ENCODE measurements at regions of chr15 and their contacts with region 1.

Region 1: GRCh38 chr15:45279024-45279698 is 27.1 kb downstream of the SLC28A2 start:
- DNase-seq: peak; percentile 96
- H3K4me3 ChIP-seq: peak overlapping the region; percentile 10 to 60 (median 46)
- H3K27ac ChIP-seq: peak overlapping the region; percentile 32
- H3K4me1 ChIP-seq: peaks cover 8% of the 10 kb centered on the region
- H3K27me3 ChIP-seq: no peaks in the 10 kb centered on the region
- CTCF ChIP-seq: no peak
- POLR2A ChIP-seq: peak; percentile 79

Region 2: GRCh38 chr15:44999105-44999504 is 280.1 kb before region 1 on chr15:
- CTCF ChIA-PET with region 1: no interaction called
- POLR2A ChIA-PET with region 1: no interaction called
- dilution Hi-C with region 1: no loop called
- intact Hi-C with region 1: no loop called
- DNase-seq: no peak
- H3K4me3 ChIP-seq: no peak overlapping the region
- H3K27ac ChIP-seq: no peak overlapping the region
- H3K4me1 ChIP-seq: no peaks in the 10 kb centered on the region
- H3K27me3 ChIP-seq: peaks cover 9% of the 10 kb centered on the region in 2 experiments
- CTCF ChIP-seq: no peak
- POLR2A ChIP-seq: no peak

Region 3: DNA sequence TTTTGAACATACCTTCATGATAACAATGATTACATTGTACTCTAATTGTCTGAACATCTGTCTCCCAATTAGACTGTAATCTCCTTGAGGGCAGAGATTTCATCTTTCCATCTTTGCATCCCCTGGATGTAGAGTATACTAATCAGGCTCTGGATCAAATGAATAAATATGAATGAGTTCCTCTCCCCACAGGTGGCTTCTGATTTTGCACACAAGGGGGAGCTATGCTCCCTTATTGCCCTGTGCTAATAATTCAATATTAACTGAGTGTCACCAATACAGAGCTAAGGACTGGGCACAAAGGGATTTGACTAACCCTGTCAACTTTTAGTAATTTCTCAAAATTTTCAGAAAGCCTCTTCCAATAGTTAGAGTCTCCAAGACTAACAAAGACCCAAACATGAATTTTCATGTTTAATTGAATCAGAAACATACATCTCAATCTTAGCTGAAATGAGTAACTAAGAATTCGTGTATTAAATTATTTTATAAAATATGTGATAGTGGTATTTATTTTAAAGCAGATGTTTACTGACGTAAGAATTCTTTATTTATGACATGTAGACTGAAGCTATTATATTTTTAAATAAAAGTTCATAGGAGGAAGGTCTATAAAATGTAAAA is 152.5 kb before region 1 on chr15:
- CTCF ChIA-PET with region 1: interaction called, 10 read pairs
- POLR2A ChIA-PET with region 1: no interaction called
- dilution Hi-C with region 1: no loop called
- intact Hi-C with region 1: no loop called
- DNase-seq: peak; percentile 37
- H3K4me3 ChIP-seq: no peak overlapping the region
- H3K27ac ChIP-seq: no peak overlapping the region
- H3K4me1 ChIP-seq: peaks cover 6% of the 10 kb centered on the region
- H3K27me3 ChIP-seq: peaks cover 57 to 77% of the 10 kb centered on the region in 2 experiments
- CTCF ChIP-seq: peak; percentile 44 to 50
- POLR2A ChIP-seq: no peak

Region 4: GRCh38 chr15:45205192-45205591 is 74.0 kb before region 1 on chr15:
- CTCF ChIA-PET with region 1: interaction called, 3 read pairs
- POLR2A ChIA-PET with region 1: no interaction called
- dilution Hi-C with region 1: no loop called
- intact Hi-C with region 1: loop called (anchors 1 kb)
- DNase-seq: peak; percentile 33
- H3K4me3 ChIP-seq: no peak overlapping the region
- H3K27ac ChIP-seq: no peak overlapping the region
- H3K4me1 ChIP-seq: peaks cover 3% of the 10 kb centered on the region
- H3K27me3 ChIP-seq: peaks cover 9 to 12% of the 10 kb centered on the region in 2 experiments
- CTCF ChIP-seq: peak; percentile 73 to 88
- POLR2A ChIP-seq: no peak

Region 5: DNA sequence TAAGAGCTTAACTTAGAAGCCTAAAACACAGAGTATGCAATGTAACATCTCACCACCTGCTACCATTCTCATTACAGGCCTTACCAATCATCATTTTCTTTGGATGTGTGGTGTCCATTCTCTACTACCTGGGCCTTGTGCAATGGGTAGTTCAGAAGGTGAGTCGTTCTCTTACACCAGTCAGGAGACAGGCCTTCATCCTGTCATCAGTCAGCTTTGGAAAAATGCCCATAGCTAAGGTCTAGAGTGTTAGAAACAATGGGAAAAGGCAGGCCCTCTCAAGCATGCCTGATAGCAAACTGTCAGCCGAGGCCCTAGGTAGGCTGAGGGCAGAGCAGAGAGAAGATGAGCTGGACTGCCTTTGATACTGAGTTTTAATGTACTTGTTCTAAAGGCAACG is 13.7 kb before region 1 on chr15:
- CTCF ChIA-PET with region 1: no interaction called
- POLR2A ChIA-PET with region 1: no interaction called
- dilution Hi-C with region 1: no loop called
- intact Hi-C with region 1: no loop called
- DNase-seq: no peak
- H3K4me3 ChIP-seq: no peak overlapping the region
- H3K27ac ChIP-seq: no peak overlapping the region
- H3K4me1 ChIP-seq: no peaks in the 10 kb centered on the region
- H3K27me3 ChIP-seq: peaks cover 0 to 1% of the 10 kb centered on the region in 2 experiments
- CTCF ChIP-seq: no peak
- POLR2A ChIP-seq: no peak

Measured in endothelial cell of umbilical vein (primary cell).